ENCODE measurements at regions of chr1 and their contacts with region 1.

Region 1: GRCh38 chr1:183915625-183916510 is 110.9 kb downstream of the RGL1 start:
- DNase-seq: peak; percentile 61 to 68
- H3K4me3 ChIP-seq: no peak overlapping the region
- H3K27ac ChIP-seq: no peak overlapping the region
- H3K4me1 ChIP-seq: no peaks in the 10 kb centered on the region
- H3K27me3 ChIP-seq: no peaks in the 10 kb centered on the region
- CTCF ChIP-seq: peak in 2 of 3 experiments; percentile 81 to 84; a peak in 3 of 4 replicates
- EP300 ChIP-seq: no peak
- POLR2A ChIP-seq: no peak
- RAD21 ChIP-seq: peak; percentile 97 to 98

Region 2: DNA sequence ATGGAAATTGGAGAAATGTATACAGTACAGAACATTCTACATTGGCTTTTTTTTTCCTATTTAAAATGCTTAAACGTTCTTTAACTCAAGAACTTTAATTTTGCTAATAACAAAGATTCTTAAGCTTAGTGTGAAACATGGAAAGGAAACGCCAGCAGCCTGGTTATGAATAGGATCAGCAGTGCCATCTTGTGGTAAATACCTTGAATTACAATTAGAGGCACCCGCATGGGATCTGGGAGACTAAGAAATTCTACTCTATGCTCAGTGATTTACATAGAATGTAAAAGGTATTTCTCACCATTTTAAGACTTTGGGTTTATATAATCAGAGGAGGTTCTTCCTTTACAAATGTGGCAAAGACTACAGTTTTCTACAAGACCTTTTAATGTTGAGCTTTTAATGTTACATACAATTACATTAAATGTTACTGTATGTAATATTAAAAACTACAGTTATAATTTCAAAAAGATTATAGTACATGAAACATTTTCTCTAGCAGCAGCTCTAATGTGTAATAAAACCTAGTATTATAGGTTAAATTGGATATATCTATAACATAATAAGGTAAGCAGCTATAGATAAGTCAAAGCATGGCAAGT is 230.7 kb before region 1 on chr1:
- CTCF ChIA-PET with region 1: interaction called, 45 read pairs
- POLR2A ChIA-PET with region 1: no interaction called
- DNase-seq: no peak
- H3K4me3 ChIP-seq: no peak overlapping the region
- H3K27ac ChIP-seq: no peak overlapping the region
- H3K4me1 ChIP-seq: peaks cover 0 to 2% (median 0%) of the 10 kb centered on the region in 4 experiments; a peak in 1 of 7 replicates
- H3K27me3 ChIP-seq: no peaks in the 10 kb centered on the region
- CTCF ChIP-seq: peak in 2 of 3 experiments; percentile 58 to 71; a peak in 3 of 4 replicates
- EP300 ChIP-seq: no peak
- POLR2A ChIP-seq: no peak
- RAD21 ChIP-seq: peak; percentile 81 to 82

Region 3: DNA sequence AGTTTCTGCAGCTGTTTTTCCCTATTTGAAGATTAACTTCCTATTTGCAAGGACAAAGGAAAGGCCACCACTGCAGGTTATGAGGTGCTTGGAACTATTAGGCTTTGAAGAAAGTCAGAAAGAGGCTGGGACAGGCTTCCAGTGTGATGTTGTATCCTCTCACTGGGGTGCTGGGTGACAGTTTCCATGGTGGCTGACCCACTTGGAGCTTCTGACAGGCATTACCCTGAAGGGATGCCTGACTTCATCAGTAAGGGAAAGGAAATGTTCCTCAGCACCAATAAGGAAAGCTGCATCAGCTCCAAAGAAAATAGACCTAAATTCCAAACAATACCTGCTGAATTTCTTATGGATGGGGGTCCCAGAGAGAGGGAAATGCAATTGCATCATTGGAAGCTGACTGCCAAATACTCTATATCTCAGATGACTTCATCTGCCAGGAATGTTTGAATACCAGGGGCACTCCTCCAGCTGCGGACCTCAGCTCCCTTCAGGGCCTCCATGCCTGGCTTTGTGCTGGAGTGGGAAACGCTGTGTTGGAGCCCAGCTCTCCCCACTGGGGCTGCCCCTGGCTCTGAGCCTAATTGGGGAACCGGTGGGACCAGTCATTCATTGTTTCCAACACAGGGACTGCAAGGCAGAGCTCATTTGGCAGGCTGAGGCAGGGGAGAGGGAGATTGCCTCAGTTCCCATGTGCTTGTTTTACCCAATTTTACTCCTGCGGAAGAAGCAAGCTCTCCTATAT is 34.3 kb before region 1 on chr1:
- CTCF ChIA-PET with region 1: interaction called, 11 read pairs
- POLR2A ChIA-PET with region 1: no interaction called
- DNase-seq: peak; percentile 33 to 51
- H3K4me3 ChIP-seq: no peak overlapping the region
- H3K27ac ChIP-seq: no peak overlapping the region
- H3K4me1 ChIP-seq: peaks cover 2 to 5% (median 2%) of the 10 kb centered on the region in 4 experiments; a peak in 5 of 7 replicates
- H3K27me3 ChIP-seq: no peaks in the 10 kb centered on the region
- CTCF ChIP-seq: no peak
- EP300 ChIP-seq: no peak
- POLR2A ChIP-seq: 0 out of 3 replicates have a peak, but pooled peaks of 1 of the 2 experiments have one; percentile 16
- RAD21 ChIP-seq: no peak

Region 4: DNA sequence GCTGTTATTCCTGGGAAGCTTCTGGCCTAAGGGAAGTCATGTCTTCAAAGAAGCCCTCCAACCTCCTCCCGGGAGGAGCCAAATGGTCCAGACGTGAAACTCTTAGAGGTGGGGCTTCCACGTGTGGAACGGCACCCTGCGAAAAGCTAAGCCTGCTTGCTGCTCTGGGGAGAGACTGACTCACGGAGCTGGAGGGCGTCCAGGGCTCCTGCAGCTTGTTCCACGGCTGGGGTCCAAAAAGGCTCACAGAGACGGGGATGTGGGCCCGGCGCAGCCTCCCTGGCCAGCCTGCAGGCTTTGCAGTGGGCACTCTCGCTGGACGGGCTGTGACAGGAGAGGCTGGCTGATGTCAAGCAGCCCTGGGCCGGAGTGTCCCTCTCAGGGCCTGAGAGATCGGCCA is 16.5 kb after region 1 on chr1:
- CTCF ChIA-PET with region 1: interaction called, 21 read pairs
- POLR2A ChIA-PET with region 1: no interaction called
- DNase-seq: peak in 1 of 2 experiments; percentile 41
- H3K4me3 ChIP-seq: no peak overlapping the region
- H3K27ac ChIP-seq: no peak overlapping the region
- H3K4me1 ChIP-seq: no peaks in the 10 kb centered on the region
- H3K27me3 ChIP-seq: no peaks in the 10 kb centered on the region
- CTCF ChIP-seq: no peak
- EP300 ChIP-seq: no peak
- POLR2A ChIP-seq: no peak
- RAD21 ChIP-seq: no peak

Measured in H1 (cell line).